Naive thymus-derived CD4-positive, alpha-beta T cell (primary cell): ENCODE measurements at regions of chr17 and their contacts with region 1.

Region 1: GRCh38 chr17:76506408-76507349 is 5.5 kb upstream of the RHBDF2 start:
- DNase-seq: peak; percentile 74 to 94 (median 86)
- ATAC-seq: peak; percentile 88
- H3K4me3 ChIP-seq: no peak overlapping the region
- H3K4me3 Mint-ChIP-seq: no peak overlapping the region
- H3K27ac ChIP-seq: no peak overlapping the region
- H3K27ac Mint-ChIP-seq: peak overlapping the region in 6 of 9 donors; percentile 5 to 60 (median 42)
- H3K4me1 ChIP-seq: peaks cover 13 to 21% of the 10 kb centered on the region in 2 donors
- H3K4me1 Mint-ChIP-seq: peaks cover 5 to 45% (median 10%) of the 10 kb centered on the region in 7 donors
- H3K27me3 ChIP-seq: no peaks in the 10 kb centered on the region
- H3K27me3 Mint-ChIP-seq: peaks cover 0 to 13% (median 0%) of the 10 kb centered on the region in 5 donors

Region 2: DNA sequence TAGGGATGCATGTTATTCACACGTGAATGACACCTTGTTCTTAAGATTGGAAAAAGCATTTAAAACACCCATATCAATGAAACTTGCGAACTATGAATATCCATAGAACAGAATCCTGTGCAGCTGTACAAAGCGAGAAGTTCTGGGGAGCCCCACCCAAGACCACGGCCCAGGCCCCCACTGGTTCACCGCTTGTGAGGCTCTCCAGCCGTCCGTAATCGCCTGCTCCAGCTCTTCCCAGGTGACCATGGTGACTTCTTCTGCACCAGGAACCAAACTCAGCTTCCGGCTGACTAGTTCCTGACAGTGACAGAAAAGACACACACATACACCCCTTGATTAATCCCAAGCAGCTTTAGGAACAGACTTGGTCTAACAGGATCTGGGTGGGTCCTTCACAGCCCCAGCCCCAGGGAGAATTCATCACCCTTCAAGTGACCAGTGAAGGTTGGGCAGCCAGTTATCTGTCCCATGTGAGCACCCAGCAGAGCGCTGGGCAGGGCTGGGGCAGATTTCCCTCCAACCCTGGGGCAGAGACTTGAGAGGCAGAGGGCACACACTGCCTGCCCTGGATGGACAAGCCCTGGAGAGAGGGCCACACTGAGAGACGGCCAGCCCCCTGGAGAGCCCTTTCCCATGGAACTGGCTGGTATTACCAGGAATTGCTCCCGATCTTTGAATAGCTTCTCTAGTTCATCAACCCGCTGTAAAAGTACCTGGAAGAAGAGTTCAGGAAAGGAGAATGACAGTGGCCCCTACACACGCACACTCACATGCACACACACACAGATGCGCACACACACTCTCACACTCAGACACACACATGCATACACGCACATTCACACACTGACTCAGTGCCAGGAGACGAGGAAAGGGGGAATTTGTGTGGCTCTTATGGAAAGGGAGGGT is 202.2 kb before region 1 on chr17:
- CTCF ChIA-PET with region 1: interaction called, 3 read pairs
- POLR2A ChIA-PET with region 1: no interaction called
- intact Hi-C with region 1: loop called (anchors 1 kb)
- DNase-seq: no peak
- ATAC-seq: no peak
- H3K4me3 ChIP-seq: no peak overlapping the region
- H3K4me3 Mint-ChIP-seq: no peak overlapping the region
- H3K27ac ChIP-seq: no peak overlapping the region
- H3K27ac Mint-ChIP-seq: no peak overlapping the region
- H3K4me1 ChIP-seq: no peaks in the 10 kb centered on the region
- H3K4me1 Mint-ChIP-seq: no peaks in the 10 kb centered on the region
- H3K27me3 ChIP-seq: no peaks in the 10 kb centered on the region
- H3K27me3 Mint-ChIP-seq: no peaks in the 10 kb centered on the region

Region 3: DNA sequence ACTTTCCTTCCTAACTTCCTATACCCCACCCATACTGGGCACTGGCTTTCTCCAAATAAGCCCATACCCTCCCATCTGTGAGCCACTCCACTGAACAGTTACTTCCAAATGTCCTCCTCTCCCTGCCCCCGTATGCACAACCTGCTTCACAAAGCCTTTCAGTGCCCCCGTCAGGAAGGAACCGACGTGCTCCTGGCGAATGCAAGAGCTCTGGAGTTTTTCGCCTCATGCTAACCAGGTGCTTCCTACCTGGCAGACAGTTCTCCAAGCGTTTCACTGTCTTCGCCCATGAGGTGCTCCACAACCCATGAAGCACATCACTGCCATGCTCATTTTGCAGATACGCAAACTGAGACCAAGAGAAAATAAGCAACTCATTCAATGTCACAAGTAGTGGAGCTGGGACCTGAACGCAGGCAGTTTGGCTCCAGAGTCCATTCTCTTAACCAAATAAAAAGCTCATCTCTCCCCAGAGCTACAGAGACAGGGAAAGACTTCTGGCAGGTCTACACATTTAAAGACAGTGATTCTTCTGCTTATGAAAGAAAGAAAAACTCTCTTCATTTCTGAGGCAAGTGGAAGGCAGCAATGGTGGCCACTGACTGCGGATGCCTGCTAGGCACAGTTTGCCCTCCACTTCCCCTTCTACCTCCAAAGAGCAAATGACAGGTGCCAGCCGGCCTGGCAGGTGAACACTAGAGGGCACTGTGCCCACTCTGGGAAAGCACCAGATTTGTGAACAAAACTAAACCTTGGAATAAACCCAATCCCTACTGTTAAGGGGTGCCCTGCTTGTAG is 98.4 kb before region 1 on chr17:
- CTCF ChIA-PET with region 1: interaction called, 23 read pairs
- POLR2A ChIA-PET with region 1: no interaction called
- intact Hi-C with region 1: loop called (anchors 1 kb)
- DNase-seq: peak; percentile 48 to 72 (median 65)
- ATAC-seq: peak; percentile 89
- H3K4me3 ChIP-seq: no peak overlapping the region
- H3K4me3 Mint-ChIP-seq: no peak overlapping the region
- H3K27ac ChIP-seq: no peak overlapping the region
- H3K27ac Mint-ChIP-seq: peak overlapping the region in 6 of 9 donors; percentile 25 to 75 (median 61)
- H3K4me1 ChIP-seq: no peaks in the 10 kb centered on the region
- H3K4me1 Mint-ChIP-seq: peaks cover 9 to 14% (median 11%) of the 10 kb centered on the region in 7 donors
- H3K27me3 ChIP-seq: no peaks in the 10 kb centered on the region
- H3K27me3 Mint-ChIP-seq: no peaks in the 10 kb centered on the region

Region 4: DNA sequence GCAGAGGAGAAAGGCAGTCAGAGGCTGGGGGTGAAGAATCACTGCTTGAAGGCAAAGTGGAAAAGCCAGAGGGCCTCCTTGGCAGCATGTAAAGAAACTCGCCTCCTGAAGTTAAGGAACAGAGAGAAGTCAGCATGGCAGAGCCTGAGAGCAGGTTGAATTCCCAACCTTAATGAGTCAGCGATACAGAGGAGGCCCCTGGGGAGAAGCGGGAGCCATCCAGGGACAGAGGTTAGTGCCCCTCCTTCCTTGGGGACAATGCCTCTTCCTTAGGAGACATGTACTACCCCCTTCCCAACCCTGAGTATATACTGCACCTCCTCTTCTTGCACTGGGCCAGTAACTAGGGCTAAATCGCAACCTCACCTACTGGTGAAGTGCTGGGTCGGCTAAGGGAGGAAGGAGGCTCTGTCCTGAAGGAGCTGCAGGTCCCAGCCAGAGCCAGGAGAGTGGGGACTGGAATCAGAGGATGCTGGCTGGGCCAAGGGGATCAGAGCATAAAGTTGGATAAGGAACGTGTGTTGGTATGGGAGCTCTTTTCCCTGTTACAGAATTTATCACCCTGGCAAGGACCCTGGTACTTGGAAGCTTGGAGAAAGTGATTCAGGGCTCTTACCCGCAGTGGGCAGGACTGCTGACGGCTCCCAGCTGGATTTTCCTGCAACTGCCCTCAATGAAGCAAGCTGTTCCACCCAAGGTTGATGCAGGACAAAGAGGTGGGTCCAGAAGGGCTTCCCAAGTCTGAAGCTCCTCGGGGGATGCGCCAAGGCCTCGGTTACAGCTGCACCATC is 44.7 kb before region 1 on chr17:
- CTCF ChIA-PET with region 1: interaction called, 45 read pairs
- POLR2A ChIA-PET with region 1: interaction called, 7 read pairs
- intact Hi-C with region 1: loop called (anchors 1 kb)
- DNase-seq: no peak
- ATAC-seq: no peak
- H3K4me3 ChIP-seq: no peak overlapping the region
- H3K4me3 Mint-ChIP-seq: no peak overlapping the region
- H3K27ac ChIP-seq: no peak overlapping the region
- H3K27ac Mint-ChIP-seq: peak overlapping the region in 1 of 9 donors; percentile 7
- H3K4me1 ChIP-seq: no peaks in the 10 kb centered on the region
- H3K4me1 Mint-ChIP-seq: peaks cover 0 to 10% (median 4%) of the 10 kb centered on the region in 7 donors
- H3K27me3 ChIP-seq: no peaks in the 10 kb centered on the region
- H3K27me3 Mint-ChIP-seq: peaks cover 0 to 11% (median 0%) of the 10 kb centered on the region in 5 donors

Region 5: DNA sequence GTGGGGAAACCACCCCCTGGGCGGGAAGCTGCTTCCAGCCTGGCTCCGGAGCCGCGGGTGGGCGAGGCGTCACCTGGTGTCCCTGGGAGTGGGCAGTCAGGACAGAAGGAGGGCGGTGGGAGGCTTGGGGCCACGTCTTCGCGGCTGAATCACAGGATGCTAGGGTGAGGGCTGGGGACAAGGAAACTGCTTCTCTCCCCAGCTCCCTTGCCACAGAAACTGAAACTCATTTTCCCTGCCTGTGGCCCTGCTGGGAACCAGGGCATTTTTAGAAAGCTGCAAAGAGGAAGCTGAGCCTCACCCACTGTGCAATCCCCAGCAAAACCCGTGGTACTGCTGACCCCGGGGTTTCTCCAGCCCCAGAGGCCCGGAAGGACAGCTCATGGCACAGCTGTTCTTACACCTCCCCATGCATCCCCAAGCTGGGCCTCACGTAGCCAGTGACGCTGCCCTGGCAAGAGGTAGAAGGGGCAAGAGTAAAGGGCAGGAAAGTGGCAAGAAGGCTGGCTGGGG is 13.6 kb before region 1 on chr17:
- CTCF ChIA-PET with region 1: interaction called, 18 read pairs
- POLR2A ChIA-PET with region 1: interaction called, 19 read pairs
- intact Hi-C with region 1: loop called in 1 of 2 experiments (anchors 1 kb)
- DNase-seq: peak in 2 of 9 donors; percentile 22 to 70
- ATAC-seq: peak; percentile 84
- H3K4me3 ChIP-seq: peak overlapping the region; percentile 65
- H3K4me3 Mint-ChIP-seq: peak overlapping the region; percentile 72 to 92 (median 82)
- H3K27ac ChIP-seq: peak overlapping the region; percentile 0
- H3K27ac Mint-ChIP-seq: peak overlapping the region; percentile 44 to 99 (median 76)
- H3K4me1 ChIP-seq: peaks cover 32 to 47% of the 10 kb centered on the region in 2 donors
- H3K4me1 Mint-ChIP-seq: peaks cover 12 to 76% (median 32%) of the 10 kb centered on the region in 7 donors
- H3K27me3 ChIP-seq: no peaks in the 10 kb centered on the region
- H3K27me3 Mint-ChIP-seq: no peaks in the 10 kb centered on the region

Region 6: GRCh38 chr17:76547184-76547641 is 40.5 kb after region 1 on chr17:
- CTCF ChIA-PET with region 1: interaction called, 3 read pairs
- POLR2A ChIA-PET with region 1: no interaction called
- intact Hi-C with region 1: loop called in 1 of 2 experiments (anchors 1 kb)
- DNase-seq: peak in 8 of 9 donors; percentile 47 to 71 (median 64)
- ATAC-seq: peak; percentile 92
- H3K4me3 ChIP-seq: no peak overlapping the region
- H3K4me3 Mint-ChIP-seq: no peak overlapping the region
- H3K27ac ChIP-seq: no peak overlapping the region
- H3K27ac Mint-ChIP-seq: no peak overlapping the region
- H3K4me1 ChIP-seq: no peaks in the 10 kb centered on the region
- H3K4me1 Mint-ChIP-seq: peaks cover 0 to 14% (median 4%) of the 10 kb centered on the region in 7 donors
- H3K27me3 ChIP-seq: no peaks in the 10 kb centered on the region
- H3K27me3 Mint-ChIP-seq: peaks cover 3 to 18% (median 7%) of the 10 kb centered on the region in 5 donors